A549 (cell line): ENCODE measurements at regions of chr6 and their contacts with region 1.

Region 1: GRCh38 chr6:89122625-89123024 is 4.8 kb upstream of the SRSF12 start:
- DNase-seq: peak in 1 of 2 experiments; percentile 51
- ATAC-seq: peak; percentile 63 to 81; a peak in 3 of 6 replicates
- H3K4me3 ChIP-seq: no peak overlapping the region
- H3K27ac ChIP-seq: no peak overlapping the region
- H3K4me1 ChIP-seq: peaks cover 17% of the 10 kb centered on the region; the same call in 2 of the 3 replicates
- CTCF ChIP-seq: peak; percentile 71
- EP300 ChIP-seq: no peak
- POLR2A ChIP-seq: no peak
- RAD21 ChIP-seq: peak; percentile 82 to 83

Region 2: DNA sequence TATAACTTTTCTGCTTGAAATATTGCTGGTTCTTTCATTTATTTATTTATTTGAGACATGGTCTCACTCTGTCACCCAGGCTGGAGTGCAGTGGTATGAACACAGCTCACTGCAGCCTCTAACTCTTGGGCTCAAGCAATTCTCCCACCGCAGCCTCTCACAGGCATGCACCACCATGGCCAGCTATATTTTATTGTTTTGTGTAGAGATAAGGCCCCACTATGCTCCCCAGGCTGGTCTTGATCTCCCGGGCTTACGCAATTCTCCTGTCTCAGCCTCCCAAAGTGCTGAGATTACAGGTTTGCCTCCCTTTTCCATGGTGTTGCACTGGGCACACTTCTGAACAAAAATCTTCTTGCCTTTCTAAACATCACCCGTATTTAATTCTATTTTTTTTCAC is 120.1 kb before region 1 on chr6:
- CTCF ChIA-PET with region 1: no interaction called
- POLR2A ChIA-PET with region 1: no interaction called
- DNase-seq: no peak
- ATAC-seq: no peak
- H3K4me3 ChIP-seq: no peak overlapping the region
- H3K27ac ChIP-seq: no peak overlapping the region
- H3K4me1 ChIP-seq: peaks cover 9% of the 10 kb centered on the region; the same call in 1 of the 3 replicates
- CTCF ChIP-seq: no peak
- EP300 ChIP-seq: no peak
- POLR2A ChIP-seq: no peak
- RAD21 ChIP-seq: no peak

Region 3: GRCh38 chr6:89140347-89141156 is 17.9 kb after region 1 on chr6:
- CTCF ChIA-PET with region 1: interaction called, 10 read pairs
- POLR2A ChIA-PET with region 1: interaction called, 5 read pairs
- DNase-seq: peak in 1 of 2 experiments; percentile 26
- ATAC-seq: peak; percentile 56 to 80; a peak in 4 of 6 replicates
- H3K4me3 ChIP-seq: no peak overlapping the region
- H3K27ac ChIP-seq: peak overlapping the region; percentile 76 to 77
- H3K4me1 ChIP-seq: peaks cover 40% of the 10 kb centered on the region
- CTCF ChIP-seq: no peak
- EP300 ChIP-seq: no peak
- POLR2A ChIP-seq: no peak
- RAD21 ChIP-seq: no peak

Region 4: GRCh38 chr6:89242574-89243330 is 120.1 kb after region 1 on chr6:
- CTCF ChIA-PET with region 1: interaction called, 14 read pairs
- POLR2A ChIA-PET with region 1: no interaction called
- DNase-seq: peak; percentile 25 to 59
- ATAC-seq: peak; percentile 64 to 79; a peak in 5 of 6 replicates
- H3K4me3 ChIP-seq: no peak overlapping the region
- H3K27ac ChIP-seq: no peak overlapping the region
- H3K4me1 ChIP-seq: no peaks in the 10 kb centered on the region
- CTCF ChIP-seq: peak; percentile 56
- EP300 ChIP-seq: no peak
- POLR2A ChIP-seq: no peak
- RAD21 ChIP-seq: peak; percentile 74 to 79